ENCODE measurements at regions of chr4 and their contacts with region 1.

Region 1: GRCh38 chr4:103099691-103100392 is at the start of gene BDH2:
- DNase-seq: peak in 1 of 3 donors; percentile 73
- ATAC-seq: peak; percentile 99
- H3K4me3 ChIP-seq: peak within 1 kb of the TSS; percentile 3
- H3K4me1 ChIP-seq: no peaks in the 10 kb centered on the region
- CTCF ChIP-seq: peak; percentile 28
- total RNA-seq, gene BDH2: 27.1 to 35.1 (median 31.2) TPM

Region 2: DNA sequence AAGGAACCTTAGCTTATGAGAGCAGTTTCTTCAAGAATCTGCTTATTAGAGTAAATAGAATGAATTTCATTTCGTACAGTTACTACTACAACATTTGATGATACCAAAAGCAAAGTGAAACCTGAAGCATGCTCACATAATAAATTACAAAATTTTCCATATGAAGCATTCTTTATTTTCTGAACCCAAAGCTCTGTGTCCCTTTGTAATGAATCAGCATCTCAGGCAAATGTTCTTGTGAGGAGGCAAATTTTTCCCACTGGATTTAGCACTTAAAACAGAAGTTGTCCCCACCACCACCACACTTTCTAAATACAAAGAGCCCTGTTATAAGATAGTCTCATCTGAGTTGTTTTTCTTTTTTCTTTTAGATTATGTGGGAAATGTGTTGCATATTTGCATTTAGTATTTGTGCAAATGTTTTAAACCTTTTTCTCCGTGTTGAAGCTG is 669.4 kb before region 1 on chr4:
- intact Hi-C with region 1: loop called in 1 of 2 experiments (anchors 5 kb)
- DNase-seq: no peak
- ATAC-seq: no peak
- H3K4me3 ChIP-seq: peak overlapping the region; percentile 15
- H3K4me1 ChIP-seq: peaks cover 3% of the 10 kb centered on the region
- CTCF ChIP-seq: no peak

Region 3: GRCh38 chr4:103400405-103400804 is 300.6 kb after region 1 on chr4:
- intact Hi-C with region 1: no loop called
- DNase-seq: no peak
- ATAC-seq: no peak
- H3K4me3 ChIP-seq: no peak overlapping the region
- H3K4me1 ChIP-seq: no peaks in the 10 kb centered on the region
- CTCF ChIP-seq: no peak